ENCODE measurements at regions of chr12 and their contacts with region 1.

Region 1: GRCh38 chr12:8045952-8046944 is 13.7 kb downstream of the FOXJ2 start:
- DNase-seq: peak; percentile 80
- H3K4me3 ChIP-seq: no peak overlapping the region
- H3K27ac ChIP-seq: no peak overlapping the region
- H3K4me1 ChIP-seq: no peaks in the 10 kb centered on the region
- H3K27me3 ChIP-seq: no peaks in the 10 kb centered on the region
- CTCF ChIP-seq: peak; percentile 91

Region 2: DNA sequence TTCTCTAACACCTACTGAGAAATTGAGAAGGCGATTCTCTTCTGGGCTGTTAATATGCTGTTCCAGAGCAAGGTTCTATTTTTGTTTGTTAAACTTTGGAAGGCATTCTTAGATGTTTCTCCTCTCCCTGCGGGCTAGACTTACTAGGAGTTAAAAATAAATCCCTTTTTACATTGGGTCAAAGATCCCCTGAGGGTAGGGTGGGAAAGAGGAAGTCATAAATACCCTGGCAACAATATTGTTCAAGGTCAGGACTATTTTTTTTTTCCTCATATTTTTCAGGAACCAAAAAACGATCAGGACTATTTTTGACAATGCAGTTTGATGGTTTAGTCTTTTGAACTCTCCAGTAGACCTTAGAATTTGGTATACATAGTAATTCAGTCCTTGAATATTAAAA is 161.6 kb before region 1 on chr12:
- CTCF ChIA-PET with region 1: no interaction called
- POLR2A ChIA-PET with region 1: no interaction called
- intact Hi-C with region 1: no loop called
- DNase-seq: no peak
- H3K4me3 ChIP-seq: no peak overlapping the region
- H3K27ac ChIP-seq: no peak overlapping the region
- H3K4me1 ChIP-seq: peaks cover 4% of the 10 kb centered on the region
- H3K27me3 ChIP-seq: no peaks in the 10 kb centered on the region
- CTCF ChIP-seq: no peak

Region 3: DNA sequence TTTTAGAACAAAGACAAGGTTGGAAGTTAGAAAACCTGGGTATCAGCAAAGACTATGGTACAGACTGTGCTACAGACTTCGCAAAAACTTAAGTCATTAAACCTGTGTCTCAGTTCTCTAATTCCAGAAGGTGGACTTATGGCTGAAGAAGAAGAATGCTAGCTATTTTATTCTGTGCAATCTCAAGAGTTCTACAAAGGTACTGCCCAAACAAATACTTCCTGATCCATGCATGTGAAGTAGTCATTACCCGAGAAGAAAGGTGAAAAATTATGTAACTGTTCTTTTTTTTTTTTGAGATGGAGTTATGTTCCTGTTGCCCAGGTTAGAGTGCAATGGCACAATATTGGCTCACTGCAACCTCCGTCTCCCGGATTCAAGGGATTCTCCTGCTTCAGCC is 64.8 kb before region 1 on chr12:
- CTCF ChIA-PET with region 1: no interaction called
- POLR2A ChIA-PET with region 1: no interaction called
- intact Hi-C with region 1: no loop called
- DNase-seq: no peak
- H3K4me3 ChIP-seq: no peak overlapping the region
- H3K27ac ChIP-seq: no peak overlapping the region
- H3K4me1 ChIP-seq: no peaks in the 10 kb centered on the region
- H3K27me3 ChIP-seq: no peaks in the 10 kb centered on the region
- CTCF ChIP-seq: no peak

Region 4: GRCh38 chr12:8057839-8058238 is 11.6 kb after region 1 on chr12:
- CTCF ChIA-PET with region 1: no interaction called
- POLR2A ChIA-PET with region 1: no interaction called
- intact Hi-C with region 1: no loop called
- DNase-seq: no peak
- H3K4me3 ChIP-seq: no peak overlapping the region
- H3K27ac ChIP-seq: no peak overlapping the region
- H3K4me1 ChIP-seq: no peaks in the 10 kb centered on the region
- H3K27me3 ChIP-seq: no peaks in the 10 kb centered on the region
- CTCF ChIP-seq: no peak

Region 5: GRCh38 chr12:8226355-8226754 is 180.1 kb after region 1 on chr12:
- CTCF ChIA-PET with region 1: interaction called, 3 read pairs
- POLR2A ChIA-PET with region 1: no interaction called
- intact Hi-C with region 1: loop called (anchors 10 kb)
- DNase-seq: no peak
- H3K4me3 ChIP-seq: no peak overlapping the region
- H3K27ac ChIP-seq: no peak overlapping the region
- H3K4me1 ChIP-seq: no peaks in the 10 kb centered on the region
- H3K27me3 ChIP-seq: no peaks in the 10 kb centered on the region
- CTCF ChIP-seq: no peak

Measured in A673 (cell line).